Sigmoid colon (tissue), 7 donors: ENCODE measurements at regions of chr5 and their contacts with region 1.

Region 1: DNA sequence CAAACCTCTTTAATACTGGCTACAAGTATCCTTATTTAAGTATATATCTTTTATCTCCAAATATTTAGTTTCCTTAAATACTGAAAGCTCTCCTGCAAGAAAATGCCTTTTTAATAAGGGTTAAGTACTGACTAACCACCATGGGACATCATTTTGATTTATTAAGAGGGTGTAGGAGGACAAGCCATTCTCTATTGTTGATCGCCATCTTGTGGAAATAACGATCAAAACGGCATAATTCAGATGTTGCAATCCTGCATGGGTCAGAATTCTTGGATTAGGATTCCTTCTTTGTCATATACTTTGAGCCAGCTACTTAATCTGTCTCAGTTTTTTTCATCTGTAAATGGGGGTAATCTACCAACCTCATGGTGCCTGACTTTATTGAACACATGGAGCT is 28.7 kb upstream of the C5orf46 start:
- DNase-seq: no peak
- H3K4me3 ChIP-seq: no peak overlapping the region
- H3K27ac ChIP-seq: no peak overlapping the region
- H3K4me1 ChIP-seq: no peaks in the 10 kb centered on the region
- H3K27me3 ChIP-seq: no peaks in the 10 kb centered on the region
- CTCF ChIP-seq: peak in 3 of 4 experiments; percentile 29 to 45 (median 33)
- EP300 ChIP-seq: no peak
- POLR2A ChIP-seq: no peak

Region 2: GRCh38 chr5:147509710-147510651 is 425.1 kb before region 1 on chr5 and contains the start of gene DPYSL3:
- intact Hi-C with region 1: no loop called
- DNase-seq: peak; percentile 94
- H3K4me3 ChIP-seq: peak within 1 kb of the TSS; percentile 77 to 81 (median 80)
- H3K27ac ChIP-seq: peak within 1 kb of the TSS; percentile 87 to 94 (median 92)
- H3K4me1 ChIP-seq: peaks cover 0 to 47% (median 26%) of the 10 kb centered on the region in 4 donors
- H3K27me3 ChIP-seq: no peaks in the 10 kb centered on the region
- CTCF ChIP-seq: peak in 3 of 4 experiments; percentile 7 to 38 (median 21)
- EP300 ChIP-seq: peak in 2 of 4 donors; percentile 67 to 75
- POLR2A ChIP-seq: peak; percentile 20 to 58
- total RNA-seq, gene DPYSL3: 149 to 343 (median 184) TPM

Region 3: GRCh38 chr5:147887024-147887627 is 47.9 kb before region 1 on chr5:
- intact Hi-C with region 1: loop called (anchors 2 kb)
- DNase-seq: no peak
- H3K4me3 ChIP-seq: no peak overlapping the region
- H3K27ac ChIP-seq: no peak overlapping the region
- H3K4me1 ChIP-seq: no peaks in the 10 kb centered on the region
- H3K27me3 ChIP-seq: no peaks in the 10 kb centered on the region
- CTCF ChIP-seq: peak in 3 of 4 experiments; percentile 22 to 46 (median 44)
- EP300 ChIP-seq: no peak
- POLR2A ChIP-seq: no peak

Region 4: DNA sequence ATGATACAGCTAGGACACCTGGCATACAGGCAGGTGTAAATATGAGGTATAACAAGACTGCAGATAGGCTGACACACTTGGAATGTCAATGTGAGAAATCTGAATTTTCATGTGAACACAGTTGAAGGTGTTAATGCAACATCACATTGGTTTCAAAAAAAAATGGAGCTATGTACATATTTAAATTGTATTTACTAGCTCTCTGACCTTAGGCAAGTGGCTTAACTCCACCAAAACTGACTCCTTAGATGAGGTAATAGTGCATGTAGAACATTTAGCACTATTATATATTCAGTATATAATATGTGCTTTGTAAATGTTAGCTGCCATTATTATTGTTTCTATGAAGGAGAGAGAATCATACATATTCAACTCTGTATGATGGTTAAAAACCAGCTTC is 671.3 kb after region 1 on chr5:
- intact Hi-C with region 1: no loop called
- DNase-seq: no peak
- H3K4me3 ChIP-seq: no peak overlapping the region
- H3K27ac ChIP-seq: no peak overlapping the region
- H3K4me1 ChIP-seq: no peaks in the 10 kb centered on the region
- H3K27me3 ChIP-seq: no peaks in the 10 kb centered on the region
- CTCF ChIP-seq: no peak
- EP300 ChIP-seq: no peak
- POLR2A ChIP-seq: no peak